Cardiac septum (tissue), 1 donor: ENCODE measurements at regions of chr1 and their contacts with region 1.

Region 1: DNA sequence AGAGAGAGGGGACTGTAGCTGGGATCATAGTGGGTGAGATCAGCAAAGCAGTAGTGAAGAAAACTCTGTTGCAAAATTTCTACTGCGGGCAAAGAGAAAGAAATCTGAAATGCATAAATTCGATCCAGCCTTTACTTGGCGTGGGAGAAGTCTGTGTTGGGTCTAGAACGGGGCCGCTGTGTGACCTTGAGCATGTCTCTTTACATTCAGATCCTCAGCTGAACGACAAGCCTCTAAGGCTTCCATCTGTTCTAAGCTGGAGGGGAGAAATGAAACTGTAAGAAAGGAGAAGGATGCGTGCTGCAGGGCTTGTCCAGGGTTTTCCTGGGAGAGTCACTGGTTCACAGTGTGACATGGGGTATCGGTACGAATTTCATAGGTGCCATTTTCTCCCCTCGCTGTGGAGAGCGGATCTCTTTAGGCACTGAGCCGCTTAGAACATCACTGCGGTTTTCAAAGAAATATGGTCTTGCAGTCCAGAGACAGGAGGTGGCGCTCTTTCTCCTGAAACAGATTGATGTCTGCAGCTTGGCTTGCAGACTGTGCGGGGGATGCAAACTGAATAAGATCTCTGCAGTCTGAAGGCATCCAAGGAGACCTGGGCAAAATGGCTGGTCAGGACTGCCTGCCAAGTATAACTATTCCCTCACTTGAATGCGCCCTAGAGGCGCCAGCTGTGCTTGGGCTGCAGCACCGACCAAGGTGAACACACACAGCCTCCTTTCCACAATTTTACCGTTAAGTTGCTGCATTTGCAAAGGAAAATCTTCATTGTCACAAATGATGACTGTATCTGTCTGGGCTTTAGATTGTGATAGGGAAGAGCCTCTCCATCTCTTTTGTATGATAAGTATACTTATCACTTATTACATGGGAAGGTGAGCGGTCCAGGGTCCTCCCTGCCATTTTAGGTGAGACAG is 104.1 kb downstream of the XCL2 start:
- DNase-seq: no peak

Region 2: DNA sequence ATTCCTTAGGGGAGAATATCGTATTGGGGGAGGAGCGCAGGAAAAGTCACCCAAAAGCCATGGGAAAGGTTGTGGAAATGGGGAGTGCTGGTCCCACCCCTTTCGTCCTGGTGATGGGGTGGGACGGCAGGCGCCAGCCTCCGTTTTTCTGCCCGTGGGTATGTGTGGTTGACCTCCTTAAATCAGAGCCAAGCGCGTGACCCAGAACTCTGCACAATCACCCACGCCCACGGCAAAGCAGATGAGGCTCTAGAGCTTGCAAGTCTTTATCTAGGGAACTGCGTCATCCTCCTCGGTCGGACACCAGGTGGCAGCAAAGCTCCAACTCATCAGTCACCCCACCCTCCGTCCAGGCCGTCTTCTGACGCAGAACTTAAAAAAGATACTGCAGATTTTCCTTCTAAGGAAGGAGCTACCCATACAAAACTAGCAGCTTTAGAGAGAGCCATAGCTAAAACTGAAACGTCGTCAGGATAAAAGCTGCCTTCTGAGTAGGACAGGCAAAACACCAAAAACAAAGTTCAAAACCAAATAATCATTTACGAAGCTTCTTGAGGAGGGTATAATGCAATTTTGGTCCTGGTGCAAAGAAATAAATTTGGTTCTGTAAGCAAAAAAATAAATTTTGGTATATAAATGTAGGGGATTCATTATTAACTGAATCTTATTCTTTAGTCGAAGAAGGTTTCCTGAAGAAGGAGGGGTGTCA is 97.0 kb before region 1 on chr1:
- intact Hi-C with region 1: loop called (anchors 5 kb)
- DNase-seq: peak; percentile 90

Region 3: DNA sequence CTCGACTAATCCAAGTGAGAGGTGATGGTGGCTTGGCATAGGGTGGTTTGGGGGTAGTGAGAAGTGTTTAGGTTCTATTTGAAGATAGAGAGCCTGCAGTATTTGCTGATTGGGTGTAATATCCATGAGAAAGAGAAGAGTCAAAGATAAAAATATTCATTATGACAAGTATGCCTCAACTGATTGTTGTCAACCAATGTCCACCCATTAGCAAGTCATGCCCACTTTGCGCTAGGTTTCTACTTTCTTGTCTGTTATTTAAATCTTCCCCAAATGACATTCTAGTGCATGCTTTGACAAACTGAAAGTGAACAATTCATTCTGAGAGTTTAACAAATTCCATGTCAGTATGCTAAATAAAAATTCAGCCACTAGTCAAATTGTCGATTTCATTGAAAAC is 132.9 kb after region 1 on chr1:
- intact Hi-C with region 1: loop called (anchors 5 kb)
- DNase-seq: no peak

Region 4: DNA sequence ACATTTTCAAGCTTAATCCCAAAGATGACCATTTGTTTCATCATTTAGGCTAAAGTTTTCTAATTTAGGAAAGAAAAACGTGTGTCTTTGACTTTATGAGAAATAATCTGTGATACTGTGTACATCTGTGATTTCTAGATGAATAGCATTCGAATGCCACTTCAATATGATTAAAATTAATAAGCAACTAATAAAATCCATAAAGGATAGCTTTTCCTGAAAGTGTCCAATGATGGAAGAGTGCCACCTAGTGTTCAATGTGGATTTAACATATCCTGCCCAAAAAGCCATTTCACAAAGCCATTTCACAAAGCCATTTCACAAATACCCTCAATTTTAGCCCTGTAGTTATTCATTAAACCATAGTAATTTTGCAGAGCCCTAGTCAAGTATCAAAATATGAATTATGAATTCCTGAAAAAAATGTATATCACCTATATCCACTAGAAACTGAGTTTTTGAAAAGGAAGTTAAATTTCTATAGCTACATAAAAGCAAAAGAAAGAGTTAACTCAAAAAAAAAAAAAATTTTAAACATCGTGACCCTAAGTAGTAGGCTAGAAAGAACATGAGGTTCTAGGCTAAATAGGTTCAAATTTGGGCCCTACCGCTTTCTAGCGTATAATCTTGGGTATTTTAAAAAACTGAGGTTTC is 908.8 kb after region 1 on chr1:
- intact Hi-C with region 1: loop called (anchors 10 kb)
- DNase-seq: no peak